ENCODE measurements at regions of chr12 and their contacts with region 1.

Region 1: GRCh38 chr12:7933255-7933729 is 2.7 kb downstream of the SLC2A3 start:
- H3K4me3 ChIP-seq: peak overlapping the region; percentile 12
- H3K27ac ChIP-seq: no peak overlapping the region
- H3K4me1 ChIP-seq: peaks cover 2% of the 10 kb centered on the region; the same call in 1 of the 2 replicates
- CTCF ChIP-seq: peak; percentile 77

Region 2: DNA sequence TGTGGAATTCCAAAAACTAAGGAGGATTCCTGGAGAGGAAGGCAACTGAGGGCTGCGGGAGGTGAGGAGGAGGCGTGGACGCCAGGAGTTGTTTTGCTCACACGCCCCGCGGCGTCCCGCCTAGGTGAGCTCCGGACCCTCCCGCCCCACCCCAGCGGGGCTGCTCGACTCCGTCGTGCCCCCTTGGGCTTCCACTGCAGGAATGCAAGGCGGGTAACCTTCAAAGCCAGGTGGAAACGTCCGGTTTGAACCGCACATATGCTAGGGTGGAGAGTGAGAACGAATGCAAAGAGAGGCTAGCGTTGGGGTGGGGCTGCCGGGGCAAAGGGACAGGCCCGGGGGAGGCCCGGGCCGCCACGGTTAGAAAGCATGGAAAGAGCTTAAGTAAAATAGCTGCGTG is 227.5 kb before region 1 on chr12:
- CTCF ChIA-PET with region 1: no interaction called
- POLR2A ChIA-PET with region 1: no interaction called
- H3K4me3 ChIP-seq: no peak overlapping the region
- H3K27ac ChIP-seq: no peak overlapping the region
- H3K4me1 ChIP-seq: no peaks in the 10 kb centered on the region
- CTCF ChIP-seq: no peak

Region 3: GRCh38 chr12:7907009-7907408 is 26.3 kb before region 1 on chr12:
- CTCF ChIA-PET with region 1: interaction called, 9 read pairs
- POLR2A ChIA-PET with region 1: interaction called, 12 read pairs
- H3K4me3 ChIP-seq: no peak overlapping the region
- H3K27ac ChIP-seq: no peak overlapping the region
- H3K4me1 ChIP-seq: peaks cover 12% of the 10 kb centered on the region
- CTCF ChIP-seq: peak; percentile 73; the same call in 1 of the 2 replicates

Region 4: GRCh38 chr12:7959701-7960121 is 26.4 kb after region 1 on chr12:
- CTCF ChIA-PET with region 1: interaction called, 70 read pairs
- POLR2A ChIA-PET with region 1: interaction called, 108 read pairs
- H3K4me3 ChIP-seq: no peak overlapping the region
- H3K27ac ChIP-seq: no peak overlapping the region
- H3K4me1 ChIP-seq: no peaks in the 10 kb centered on the region
- CTCF ChIP-seq: no peak

Region 5: GRCh38 chr12:7995266-7995963 is 62.1 kb after region 1 on chr12:
- CTCF ChIA-PET with region 1: interaction called, 52 read pairs
- POLR2A ChIA-PET with region 1: interaction called, 9 read pairs
- H3K4me3 ChIP-seq: no peak overlapping the region
- H3K27ac ChIP-seq: no peak overlapping the region
- H3K4me1 ChIP-seq: no peaks in the 10 kb centered on the region
- CTCF ChIP-seq: peak; percentile 77

Region 6: GRCh38 chr12:8018666-8019581 is 85.6 kb after region 1 on chr12:
- CTCF ChIA-PET with region 1: no interaction called
- POLR2A ChIA-PET with region 1: no interaction called
- H3K4me3 ChIP-seq: no peak overlapping the region
- H3K27ac ChIP-seq: no peak overlapping the region
- H3K4me1 ChIP-seq: no peaks in the 10 kb centered on the region
- CTCF ChIP-seq: no peak

Region 7: DNA sequence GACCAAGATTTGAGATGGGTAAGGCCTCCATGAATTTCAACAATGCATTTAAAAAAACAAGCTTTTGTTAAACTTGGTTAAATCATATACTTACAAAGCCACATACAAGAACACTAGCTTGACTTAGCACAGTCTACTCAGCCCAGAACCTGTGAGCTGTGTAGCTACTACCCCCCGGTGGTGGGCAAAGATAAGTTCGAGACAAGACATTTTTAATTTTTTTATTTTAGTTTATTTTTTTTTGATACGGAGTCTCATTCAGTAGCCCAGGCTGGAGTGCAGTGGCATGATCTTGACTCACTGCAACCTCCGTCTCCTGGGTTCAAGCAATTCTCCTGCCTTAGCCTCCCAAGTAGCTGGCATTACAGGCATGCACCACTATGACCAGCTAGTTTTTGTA is 145.1 kb after region 1 on chr12:
- CTCF ChIA-PET with region 1: interaction called, 19 read pairs
- POLR2A ChIA-PET with region 1: interaction called, 6 read pairs
- H3K4me3 ChIP-seq: no peak overlapping the region
- H3K27ac ChIP-seq: no peak overlapping the region
- H3K4me1 ChIP-seq: peaks cover 14% of the 10 kb centered on the region
- CTCF ChIP-seq: peak; percentile 69